MCF 10A (cell line): ENCODE measurements at regions of chr1 and their contacts with region 1.

Region 1: DNA sequence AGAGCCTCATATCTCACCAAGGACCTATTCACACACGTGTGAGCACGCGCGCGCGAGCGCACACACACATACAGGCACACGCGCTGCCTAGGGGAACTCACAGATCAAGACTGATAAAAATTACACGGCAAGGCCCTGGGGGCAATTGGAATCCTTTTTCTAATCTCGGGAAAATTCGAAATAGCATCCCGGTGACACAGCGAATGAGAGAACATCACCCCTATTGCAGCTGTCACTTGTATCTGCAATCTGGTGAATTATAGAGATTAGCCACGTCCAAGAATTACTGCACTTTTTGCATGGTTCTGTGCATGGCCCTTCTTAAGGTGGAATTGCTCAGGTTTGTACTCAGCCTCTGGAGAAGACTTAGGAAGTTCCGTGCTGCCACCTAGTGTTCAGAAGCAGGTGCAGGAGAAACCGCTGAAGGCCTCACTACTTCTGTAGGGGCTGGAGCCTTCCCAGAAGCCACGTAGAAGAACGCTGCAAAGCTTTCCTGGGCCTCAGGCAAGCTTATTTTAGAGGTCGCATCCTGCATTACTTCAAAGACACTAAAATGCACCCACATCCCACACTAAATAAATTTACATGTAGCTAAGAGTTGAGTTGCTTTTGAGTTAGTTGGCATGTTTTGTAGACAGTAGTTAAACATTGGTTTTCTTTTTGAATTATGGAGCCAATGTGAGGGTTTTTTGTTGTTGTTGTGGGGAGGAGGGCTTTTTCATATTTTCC is 229.2 kb upstream of the CAMK1G start:
- DNase-seq: peak; percentile 99
- H3K4me3 Mint-ChIP-seq: peak overlapping the region; percentile 7
- H3K27ac Mint-ChIP-seq: peak overlapping the region; percentile 78
- H3K4me1 Mint-ChIP-seq: peaks cover 41% of the 10 kb centered on the region
- H3K27me3 Mint-ChIP-seq: no peaks in the 10 kb centered on the region
- CTCF ChIP-seq: peak; percentile 98

Region 2: DNA sequence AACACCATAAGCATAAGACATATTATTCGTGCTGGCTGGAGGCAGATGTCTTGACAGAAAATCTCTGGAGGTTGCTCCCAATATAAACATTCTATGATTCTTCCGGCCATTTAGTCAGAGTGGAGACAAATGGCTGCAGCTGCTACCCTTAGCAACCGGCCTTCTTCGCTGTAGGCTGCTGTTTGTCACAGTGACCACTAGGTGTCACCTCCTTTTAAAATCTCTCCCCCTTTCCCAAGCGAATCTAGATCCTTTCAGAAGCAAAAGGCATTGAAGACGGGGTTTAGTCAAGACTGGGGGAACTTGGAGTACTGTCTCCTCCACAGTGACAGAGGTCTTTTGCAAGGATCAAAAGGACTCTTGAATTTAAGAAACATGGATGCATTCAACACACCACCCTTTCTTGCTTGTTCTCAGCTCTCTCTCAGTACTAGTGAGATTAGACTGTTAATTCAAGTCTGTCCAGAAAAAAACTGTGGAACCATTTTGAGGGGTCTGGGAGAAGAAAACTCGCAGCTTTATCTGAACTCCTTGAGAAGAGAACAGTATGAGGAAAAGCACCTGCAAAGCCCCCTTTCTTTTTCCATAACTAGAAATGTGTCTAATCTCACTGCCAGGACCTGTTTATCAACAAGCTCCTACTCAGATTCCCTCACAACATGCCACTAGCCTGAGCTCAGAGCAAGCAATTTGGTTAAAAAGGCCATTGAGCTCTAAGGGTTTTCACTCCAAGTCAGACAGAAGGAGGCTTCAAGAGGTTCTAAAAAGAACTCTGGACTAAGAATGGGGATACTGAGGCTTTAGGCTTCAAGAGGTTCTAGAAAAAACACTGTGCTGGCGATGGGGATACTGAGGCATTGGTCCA is 701.7 kb before region 1 on chr1:
- CTCF ChIA-PET with region 1: interaction called, 19 read pairs
- POLR2A ChIA-PET with region 1: interaction called, 4 read pairs
- intact Hi-C with region 1: loop called (anchors 1 kb)
- DNase-seq: peak; percentile 83
- H3K4me3 Mint-ChIP-seq: no peak overlapping the region
- H3K27ac Mint-ChIP-seq: no peak overlapping the region
- H3K4me1 Mint-ChIP-seq: peaks cover 13% of the 10 kb centered on the region
- H3K27me3 Mint-ChIP-seq: peaks cover 21% of the 10 kb centered on the region
- CTCF ChIP-seq: peak; percentile 98

Region 3: GRCh38 chr1:209162651-209163050 is 191.6 kb before region 1 on chr1:
- CTCF ChIA-PET with region 1: no interaction called
- POLR2A ChIA-PET with region 1: no interaction called
- intact Hi-C with region 1: no loop called
- DNase-seq: no peak
- H3K4me3 Mint-ChIP-seq: no peak overlapping the region
- H3K27ac Mint-ChIP-seq: no peak overlapping the region
- H3K4me1 Mint-ChIP-seq: no peaks in the 10 kb centered on the region
- H3K27me3 Mint-ChIP-seq: peaks cover 11% of the 10 kb centered on the region
- CTCF ChIP-seq: no peak

Region 4: GRCh38 chr1:209176866-209177430 is 177.3 kb before region 1 on chr1:
- CTCF ChIA-PET with region 1: no interaction called
- POLR2A ChIA-PET with region 1: no interaction called
- intact Hi-C with region 1: no loop called
- DNase-seq: no peak
- H3K4me3 Mint-ChIP-seq: no peak overlapping the region
- H3K27ac Mint-ChIP-seq: no peak overlapping the region
- H3K4me1 Mint-ChIP-seq: peaks cover 7% of the 10 kb centered on the region
- H3K27me3 Mint-ChIP-seq: peaks cover 27% of the 10 kb centered on the region
- CTCF ChIP-seq: no peak

Region 5: DNA sequence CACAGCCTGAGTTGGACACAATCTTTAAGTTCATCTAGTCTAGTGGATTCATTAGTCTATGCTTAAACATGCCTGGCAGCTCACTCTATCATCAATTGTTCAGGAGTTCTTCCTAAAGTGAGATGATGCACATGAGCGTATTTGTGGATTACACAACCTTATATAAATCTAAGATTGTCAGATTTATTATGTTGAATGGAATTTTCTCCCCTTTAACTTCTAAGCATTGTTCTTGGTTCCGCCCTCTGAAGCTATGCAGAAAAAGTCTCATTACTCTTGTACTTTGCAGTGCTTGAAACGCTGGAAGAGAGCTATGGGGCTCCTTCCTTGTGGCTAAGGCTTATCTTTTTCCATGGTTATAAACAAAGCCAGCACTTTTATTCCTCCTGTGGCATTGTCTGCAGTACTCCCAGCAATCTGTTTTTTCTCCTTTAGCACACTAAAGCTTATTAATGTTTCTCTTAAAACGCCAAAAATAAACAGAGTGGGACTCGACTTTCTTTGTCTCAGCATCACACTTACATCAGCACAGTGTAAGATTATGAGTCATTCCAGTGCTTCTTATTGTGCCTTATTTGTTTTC is 87.6 kb before region 1 on chr1:
- CTCF ChIA-PET with region 1: interaction called, 10 read pairs
- POLR2A ChIA-PET with region 1: interaction called, 9 read pairs
- intact Hi-C with region 1: no loop called
- DNase-seq: peak; percentile 55
- H3K4me3 Mint-ChIP-seq: peak overlapping the region; percentile 7
- H3K27ac Mint-ChIP-seq: no peak overlapping the region
- H3K4me1 Mint-ChIP-seq: peaks cover 10% of the 10 kb centered on the region
- H3K27me3 Mint-ChIP-seq: no peaks in the 10 kb centered on the region
- CTCF ChIP-seq: no peak

Region 6: GRCh38 chr1:209291715-209292114 is 62.6 kb before region 1 on chr1:
- CTCF ChIA-PET with region 1: no interaction called
- POLR2A ChIA-PET with region 1: no interaction called
- intact Hi-C with region 1: no loop called
- DNase-seq: no peak
- H3K4me3 Mint-ChIP-seq: no peak overlapping the region
- H3K27ac Mint-ChIP-seq: no peak overlapping the region
- H3K4me1 Mint-ChIP-seq: no peaks in the 10 kb centered on the region
- H3K27me3 Mint-ChIP-seq: no peaks in the 10 kb centered on the region
- CTCF ChIP-seq: no peak

Region 7: DNA sequence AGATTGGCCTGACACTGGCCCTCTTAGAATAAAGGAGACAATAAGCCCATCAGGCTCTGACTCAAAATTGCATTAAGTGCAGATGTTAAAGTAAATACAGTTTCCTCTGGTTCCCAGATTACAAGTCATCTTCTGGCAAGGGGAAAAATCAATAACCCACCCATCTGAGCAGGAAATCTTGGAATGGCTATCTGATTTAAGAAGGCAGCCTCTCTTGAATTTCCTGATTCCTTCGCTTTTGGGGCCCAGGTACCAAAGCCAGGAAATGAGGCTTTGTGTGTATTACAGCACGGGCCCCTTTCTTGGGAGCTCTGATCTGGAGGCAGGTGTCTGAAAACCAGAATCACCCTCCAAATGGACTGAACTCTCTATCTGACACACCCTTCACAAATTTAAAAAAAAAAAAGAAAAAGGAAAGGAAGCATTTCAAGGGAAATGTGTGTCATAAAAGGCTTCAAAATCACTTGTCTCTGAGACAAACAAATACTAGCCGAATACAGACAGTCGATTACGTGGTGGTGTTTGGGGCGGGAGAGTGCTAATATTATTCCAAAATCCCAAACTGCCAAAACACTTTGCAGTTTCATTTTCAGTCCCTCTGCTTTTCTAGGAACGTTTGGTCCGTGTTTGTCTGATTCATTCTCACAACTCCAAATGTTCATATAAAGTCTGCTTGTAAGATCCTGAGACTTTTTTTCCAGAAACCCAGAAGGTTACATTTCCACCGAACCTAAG is 11.7 kb before region 1 on chr1:
- CTCF ChIA-PET with region 1: interaction called, 106 read pairs
- POLR2A ChIA-PET with region 1: interaction called, 6 read pairs
- intact Hi-C with region 1: no loop called
- DNase-seq: no peak
- H3K4me3 Mint-ChIP-seq: no peak overlapping the region
- H3K27ac Mint-ChIP-seq: no peak overlapping the region
- H3K4me1 Mint-ChIP-seq: no peaks in the 10 kb centered on the region
- H3K27me3 Mint-ChIP-seq: no peaks in the 10 kb centered on the region
- CTCF ChIP-seq: no peak

Region 8: GRCh38 chr1:209405183-209405814 is 51.0 kb after region 1 on chr1:
- CTCF ChIA-PET with region 1: interaction called, 85 read pairs
- POLR2A ChIA-PET with region 1: interaction called, 6,956 read pairs
- intact Hi-C with region 1: no loop called
- DNase-seq: peak; percentile 81
- H3K4me3 Mint-ChIP-seq: peak overlapping the region; percentile 17
- H3K27ac Mint-ChIP-seq: no peak overlapping the region
- H3K4me1 Mint-ChIP-seq: peaks cover 16% of the 10 kb centered on the region
- H3K27me3 Mint-ChIP-seq: no peaks in the 10 kb centered on the region
- CTCF ChIP-seq: no peak

Region 9: GRCh38 chr1:209490013-209490412 is 135.7 kb after region 1 on chr1:
- CTCF ChIA-PET with region 1: interaction called, 62 read pairs
- POLR2A ChIA-PET with region 1: interaction called, 37 read pairs
- intact Hi-C with region 1: loop called (anchors 1 kb)
- DNase-seq: peak; percentile 69
- H3K4me3 Mint-ChIP-seq: no peak overlapping the region
- H3K27ac Mint-ChIP-seq: no peak overlapping the region
- H3K4me1 Mint-ChIP-seq: peaks cover 26% of the 10 kb centered on the region
- H3K27me3 Mint-ChIP-seq: no peaks in the 10 kb centered on the region
- CTCF ChIP-seq: peak; percentile 90

Region 10: GRCh38 chr1:209590405-209590804 is 236.1 kb after region 1 on chr1:
- CTCF ChIA-PET with region 1: no interaction called
- POLR2A ChIA-PET with region 1: no interaction called
- intact Hi-C with region 1: no loop called
- DNase-seq: no peak
- H3K4me3 Mint-ChIP-seq: no peak overlapping the region
- H3K27ac Mint-ChIP-seq: no peak overlapping the region
- H3K4me1 Mint-ChIP-seq: peaks cover 16% of the 10 kb centered on the region
- H3K27me3 Mint-ChIP-seq: no peaks in the 10 kb centered on the region
- CTCF ChIP-seq: no peak